CD8-positive, alpha-beta T cell (primary cell): ENCODE measurements at regions of chr9 and their contacts with region 1.

Region 1: DNA sequence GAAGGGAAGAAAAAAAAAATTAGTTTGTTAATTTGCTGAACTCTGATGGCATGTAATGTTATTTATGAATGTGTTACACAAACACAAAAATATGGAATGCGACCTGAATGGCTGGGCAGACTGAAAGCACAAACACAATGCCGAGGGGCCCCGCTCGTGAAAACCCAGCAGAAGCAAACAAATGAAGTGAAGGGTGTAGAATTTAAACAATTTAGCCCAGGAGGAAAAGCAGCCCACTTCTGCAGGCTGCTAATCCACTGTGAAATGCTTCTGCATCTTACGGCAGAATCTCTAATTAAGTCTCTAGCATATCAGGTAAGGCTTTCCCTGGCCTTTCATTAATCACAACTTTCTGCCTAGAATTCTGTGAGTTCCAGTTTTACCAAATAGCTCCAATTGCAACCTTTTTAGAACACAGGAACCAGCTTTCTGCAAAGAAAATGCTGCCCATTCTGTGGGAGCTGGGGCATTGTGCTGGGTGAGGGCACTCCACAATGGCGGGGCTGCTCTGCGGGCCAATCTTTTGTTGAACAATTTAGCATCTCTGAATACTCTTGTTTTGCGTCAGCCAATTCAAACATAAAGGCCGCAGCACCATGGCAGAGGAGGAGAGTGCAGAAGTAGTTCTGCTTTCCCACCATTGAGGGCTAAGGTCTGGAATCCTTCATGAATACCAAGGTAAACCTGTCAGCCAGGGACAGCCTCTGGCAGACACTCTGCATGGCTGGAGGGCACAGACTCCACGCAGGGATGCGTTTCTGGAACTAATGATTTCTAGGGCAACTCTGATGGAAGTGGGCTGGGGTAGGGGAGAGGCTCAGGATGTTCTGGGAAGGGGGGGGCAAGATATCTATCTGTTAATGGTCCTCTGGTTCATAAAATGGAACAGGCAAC is 66.4 kb downstream of the PTCH1 start:
- DNase-seq: no peak
- ATAC-seq: no peak
- H3K4me3 ChIP-seq: no peak overlapping the region
- H3K4me3 Mint-ChIP-seq: no peak overlapping the region
- H3K27ac ChIP-seq: no peak overlapping the region
- H3K27ac Mint-ChIP-seq: no peak overlapping the region
- H3K4me1 ChIP-seq: no peaks in the 10 kb centered on the region
- H3K4me1 Mint-ChIP-seq: no peaks in the 10 kb centered on the region
- H3K27me3 ChIP-seq: no peaks in the 10 kb centered on the region
- H3K27me3 Mint-ChIP-seq: no peaks in the 10 kb centered on the region
- CTCF ChIP-seq: no peak

Region 2: GRCh38 chr9:95486070-95486717 is 35.8 kb after region 1 on chr9:
- CTCF ChIA-PET with region 1: no interaction called
- POLR2A ChIA-PET with region 1: no interaction called
- intact Hi-C with region 1: loop called in 1 of 2 experiments (anchors 5 kb)
- DNase-seq: no peak
- ATAC-seq: no peak
- H3K4me3 ChIP-seq: no peak overlapping the region
- H3K4me3 Mint-ChIP-seq: no peak overlapping the region
- H3K27ac ChIP-seq: no peak overlapping the region
- H3K27ac Mint-ChIP-seq: no peak overlapping the region
- H3K4me1 ChIP-seq: peaks cover 5% of the 10 kb centered on the region
- H3K4me1 Mint-ChIP-seq: peaks cover 20% of the 10 kb centered on the region
- H3K27me3 ChIP-seq: no peaks in the 10 kb centered on the region
- H3K27me3 Mint-ChIP-seq: no peaks in the 10 kb centered on the region
- CTCF ChIP-seq: no peak

Region 3: DNA sequence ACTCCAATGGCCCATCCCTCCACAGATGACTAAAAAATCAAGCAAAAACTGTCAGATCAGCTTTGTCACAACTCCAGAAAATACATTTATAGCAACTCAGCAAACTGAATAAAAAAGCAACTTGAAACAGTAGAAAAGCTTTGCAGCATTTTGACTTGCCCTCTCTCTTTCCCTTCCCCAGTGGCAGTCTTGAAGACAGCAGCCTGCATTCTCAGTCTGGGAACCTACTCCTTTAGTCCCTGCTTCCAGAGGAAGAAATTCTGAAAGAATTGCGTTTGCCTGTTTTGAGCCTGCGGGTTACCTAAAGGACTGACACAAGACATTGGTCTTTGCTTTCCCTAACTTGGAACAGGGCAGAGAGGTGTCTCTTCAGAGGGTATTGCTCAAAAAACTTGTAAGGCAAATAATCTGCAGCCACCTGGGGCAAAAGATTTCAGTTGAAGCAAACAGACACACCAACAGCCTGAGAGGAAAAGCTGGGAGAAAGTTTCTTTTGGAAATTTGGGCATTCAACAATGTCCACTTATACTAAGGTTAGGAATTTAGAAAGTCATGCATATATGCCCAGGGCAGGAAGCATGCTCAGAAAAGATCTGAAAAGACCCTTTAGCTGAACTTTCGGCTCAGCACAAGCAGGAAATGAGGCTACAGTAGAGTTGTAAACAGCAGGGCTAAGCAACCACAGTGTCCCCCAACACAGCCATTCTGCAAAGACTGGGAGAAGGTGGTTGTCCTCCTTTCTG is 948.3 kb after region 1 on chr9:
- CTCF ChIA-PET with region 1: no interaction called
- POLR2A ChIA-PET with region 1: no interaction called
- intact Hi-C with region 1: no loop called
- DNase-seq: peak in 8 of 9 experiments; percentile 8 to 68 (median 42)
- ATAC-seq: peak; percentile 82
- H3K4me3 ChIP-seq: no peak overlapping the region
- H3K4me3 Mint-ChIP-seq: peak overlapping the region; percentile 61
- H3K27ac ChIP-seq: peak overlapping the region; percentile 36 to 63
- H3K27ac Mint-ChIP-seq: peak overlapping the region; percentile 91
- H3K4me1 ChIP-seq: peaks cover 22% of the 10 kb centered on the region
- H3K4me1 Mint-ChIP-seq: peaks cover 36% of the 10 kb centered on the region
- H3K27me3 ChIP-seq: no peaks in the 10 kb centered on the region
- H3K27me3 Mint-ChIP-seq: no peaks in the 10 kb centered on the region
- CTCF ChIP-seq: no peak